ENCODE measurements at regions of chr11 and their contacts with region 1.

Region 1: DNA sequence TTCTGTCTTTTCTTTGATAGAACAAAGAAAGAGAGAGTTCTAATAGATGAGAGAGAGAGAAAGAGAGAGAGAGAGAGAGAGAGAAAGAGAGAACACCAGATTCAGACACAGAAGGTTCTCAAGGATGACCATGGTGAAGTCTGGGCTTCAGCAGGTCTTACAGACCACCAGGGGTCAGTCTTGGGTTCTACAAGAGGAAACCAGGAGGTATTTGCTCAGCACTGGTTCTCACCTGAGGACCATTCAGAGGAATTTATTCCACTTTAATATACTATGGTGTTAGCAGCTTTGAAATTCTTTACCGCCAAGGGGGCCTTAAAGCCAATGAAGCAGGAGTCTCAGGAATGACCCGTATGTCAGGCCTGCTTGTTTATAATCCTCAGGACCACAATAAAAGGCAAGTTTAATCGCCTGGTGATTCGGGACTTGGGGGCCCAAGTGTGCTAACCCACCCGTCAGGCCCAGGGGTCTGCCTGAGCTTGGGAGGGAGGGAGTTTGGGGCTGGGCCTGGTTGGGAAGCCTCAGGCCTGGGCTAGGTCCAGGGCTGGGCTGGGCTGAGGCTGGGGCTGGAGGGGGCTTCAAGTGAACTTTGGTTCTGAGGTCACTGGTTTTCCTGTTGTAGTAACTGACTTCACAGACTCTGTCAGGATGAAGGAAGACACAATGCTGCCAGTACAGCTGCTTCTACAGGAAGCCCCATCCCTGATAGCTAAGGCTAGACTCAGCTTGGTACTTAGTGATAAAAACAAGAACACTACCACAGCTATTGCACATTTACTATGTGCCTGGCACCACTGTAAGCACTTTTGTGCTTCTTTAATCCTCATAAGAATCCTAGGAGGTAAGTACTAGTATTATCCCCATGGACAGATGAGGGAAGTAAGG is 179.2 kb upstream of the ZBED5 start:
- DNase-seq: peak in 20 of 35 experiments; percentile 9 to 83 (median 30)
- ATAC-seq: peak; percentile 79 to 92 (median 86)
- H3K4me3 ChIP-seq: no peak overlapping the region
- H3K4me3 Mint-ChIP-seq: peak overlapping the region in 1 of 3 donors; percentile 38
- H3K27ac ChIP-seq: no peak overlapping the region
- H3K27ac Mint-ChIP-seq: peak overlapping the region; percentile 49 to 72
- H3K4me1 ChIP-seq: peaks cover 13 to 20% of the 10 kb centered on the region in 2 experiments
- H3K4me1 Mint-ChIP-seq: peaks cover 14 to 36% (median 18%) of the 10 kb centered on the region in 3 donors
- H3K27me3 ChIP-seq: peaks cover 0 to 2% of the 10 kb centered on the region in 2 experiments
- H3K27me3 Mint-ChIP-seq: peaks cover 0 to 5% of the 10 kb centered on the region in 2 donors

Region 2: GRCh38 chr11:10735481-10736475 is 301.3 kb before region 1 on chr11:
- CTCF ChIA-PET with region 1: no interaction called
- POLR2A ChIA-PET with region 1: no interaction called
- DNase-seq: peak; percentile 48 to 90 (median 78)
- ATAC-seq: peak; percentile 99 to 100 (median 99)
- H3K4me3 ChIP-seq: no peak overlapping the region
- H3K4me3 Mint-ChIP-seq: peak overlapping the region; percentile 28 to 52 (median 48)
- H3K27ac ChIP-seq: no peak overlapping the region
- H3K27ac Mint-ChIP-seq: peak overlapping the region; percentile 23 to 40
- H3K4me1 ChIP-seq: peaks cover 0 to 9% of the 10 kb centered on the region in 2 experiments
- H3K4me1 Mint-ChIP-seq: peaks cover 10 to 16% (median 10%) of the 10 kb centered on the region in 3 donors
- H3K27me3 ChIP-seq: peaks cover 0 to 3% of the 10 kb centered on the region in 2 experiments
- H3K27me3 Mint-ChIP-seq: no peaks in the 10 kb centered on the region

Region 3: GRCh38 chr11:11157185-11157584 is 120.1 kb after region 1 on chr11:
- CTCF ChIA-PET with region 1: interaction called, 28 to 37 read pairs
- POLR2A ChIA-PET with region 1: interaction called in 1 of 2 experiments, 4 read pairs
- DNase-seq: peak; percentile 27 to 79 (median 59)
- ATAC-seq: peak; percentile 56 to 79 (median 64)
- H3K4me3 ChIP-seq: no peak overlapping the region
- H3K4me3 Mint-ChIP-seq: peak overlapping the region in 1 of 3 donors; percentile 74
- H3K27ac ChIP-seq: no peak overlapping the region
- H3K27ac Mint-ChIP-seq: peak overlapping the region; percentile 90 to 92
- H3K4me1 ChIP-seq: peaks cover 6 to 32% of the 10 kb centered on the region in 2 experiments
- H3K4me1 Mint-ChIP-seq: peaks cover 27 to 44% (median 35%) of the 10 kb centered on the region in 3 donors
- H3K27me3 ChIP-seq: no peaks in the 10 kb centered on the region
- H3K27me3 Mint-ChIP-seq: peaks cover 0 to 4% of the 10 kb centered on the region in 2 donors

Region 4: DNA sequence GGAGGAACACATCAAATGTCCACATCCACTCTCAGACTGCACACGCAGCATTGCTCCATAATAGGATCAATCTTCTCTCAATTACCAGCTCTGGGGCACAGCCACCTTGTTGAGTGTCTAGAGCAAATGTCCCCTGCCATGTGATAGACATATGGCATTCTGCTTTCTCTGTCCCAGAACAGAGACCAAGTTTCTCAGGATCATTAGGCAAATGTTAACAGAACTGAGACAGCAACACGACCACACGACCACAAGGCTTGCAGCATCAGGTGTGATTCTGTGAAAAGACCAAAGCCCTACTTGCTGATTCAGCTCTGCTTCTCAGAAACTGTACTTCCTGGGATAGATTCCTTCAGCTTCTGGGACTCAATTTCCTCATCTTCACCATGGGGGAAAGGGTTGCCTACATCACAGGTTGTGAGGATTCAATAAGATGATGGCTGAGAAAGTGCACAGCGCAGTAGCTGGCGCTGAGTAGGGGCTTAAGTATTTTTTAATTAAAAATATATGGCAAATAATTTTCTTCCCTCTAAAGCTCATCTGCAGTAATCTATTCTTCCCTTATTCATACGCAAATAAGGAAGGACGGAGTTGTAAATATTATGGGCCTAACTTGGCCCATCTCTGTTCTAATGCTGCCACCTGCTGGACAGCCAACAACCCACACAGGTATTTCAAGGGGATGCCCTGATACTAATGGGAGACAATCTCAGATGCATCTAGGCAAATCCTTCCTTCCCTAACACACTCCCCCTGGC is 750.4 kb after region 1 on chr11:
- CTCF ChIA-PET with region 1: interaction called in 1 of 2 experiments, 15 read pairs
- POLR2A ChIA-PET with region 1: no interaction called
- DNase-seq: peak; percentile 32 to 81 (median 63)
- ATAC-seq: peak; percentile 70 to 85 (median 78)
- H3K4me3 ChIP-seq: no peak overlapping the region
- H3K4me3 Mint-ChIP-seq: no peak overlapping the region
- H3K27ac ChIP-seq: no peak overlapping the region
- H3K27ac Mint-ChIP-seq: no peak overlapping the region
- H3K4me1 ChIP-seq: no peaks in the 10 kb centered on the region
- H3K4me1 Mint-ChIP-seq: no peaks in the 10 kb centered on the region
- H3K27me3 ChIP-seq: peaks cover 0 to 9% of the 10 kb centered on the region in 2 experiments
- H3K27me3 Mint-ChIP-seq: peaks cover 6 to 7% of the 10 kb centered on the region in 2 donors